ENCODE measurements at regions of chr1 and their contacts with region 1.

Region 1: GRCh38 chr1:171654942-171655745 is 2.7 kb upstream of the MYOC start:
- DNase-seq: peak; percentile 41 to 98
- H3K4me3 ChIP-seq: no peak overlapping the region; a peak in 2 of 8 replicates
- H3K27ac ChIP-seq: no peak overlapping the region
- H3K4me1 ChIP-seq: peaks cover 0 to 5% (median 0%) of the 10 kb centered on the region in 4 experiments; a peak in 1 of 7 replicates
- H3K27me3 ChIP-seq: no peaks in the 10 kb centered on the region
- CTCF ChIP-seq: peak; percentile 79 to 91 (median 85)
- EP300 ChIP-seq: no peak
- POLR2A ChIP-seq: no peak
- RAD21 ChIP-seq: peak; percentile 65 to 71

Region 2: GRCh38 chr1:171507435-171507834 is 147.7 kb before region 1 on chr1:
- CTCF ChIA-PET with region 1: no interaction called
- POLR2A ChIA-PET with region 1: no interaction called
- DNase-seq: no peak
- H3K4me3 ChIP-seq: no peak overlapping the region
- H3K27ac ChIP-seq: no peak overlapping the region
- H3K4me1 ChIP-seq: peaks cover 0 to 6% (median 3%) of the 10 kb centered on the region in 4 experiments; a peak in 2 of 7 replicates
- H3K27me3 ChIP-seq: no peaks in the 10 kb centered on the region
- CTCF ChIP-seq: no peak
- EP300 ChIP-seq: no peak
- POLR2A ChIP-seq: no peak
- RAD21 ChIP-seq: no peak

Region 3: DNA sequence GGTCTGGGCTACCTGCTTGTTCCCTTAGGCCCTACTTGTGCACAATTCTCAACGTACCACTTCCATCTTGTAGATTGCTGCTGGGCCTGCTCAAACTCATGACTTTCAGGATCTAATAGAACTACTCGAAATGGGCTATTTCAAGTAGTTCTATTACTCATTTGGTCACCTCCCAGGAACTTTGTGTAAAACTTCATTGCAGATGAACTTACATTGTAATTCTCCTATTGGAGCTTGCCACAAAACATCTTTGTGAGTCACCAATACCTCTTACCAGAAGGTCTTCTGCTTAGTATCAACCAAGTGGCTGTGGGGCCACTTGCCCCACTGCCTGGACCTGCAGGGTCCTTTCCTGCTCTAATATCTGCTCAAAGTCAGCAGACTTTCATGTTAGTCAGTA is 43.8 kb before region 1 on chr1:
- CTCF ChIA-PET with region 1: no interaction called
- POLR2A ChIA-PET with region 1: no interaction called
- DNase-seq: no peak
- H3K4me3 ChIP-seq: no peak overlapping the region
- H3K27ac ChIP-seq: no peak overlapping the region
- H3K4me1 ChIP-seq: no peaks in the 10 kb centered on the region
- H3K27me3 ChIP-seq: no peaks in the 10 kb centered on the region
- CTCF ChIP-seq: no peak
- EP300 ChIP-seq: no peak
- POLR2A ChIP-seq: no peak
- RAD21 ChIP-seq: no peak

Region 4: DNA sequence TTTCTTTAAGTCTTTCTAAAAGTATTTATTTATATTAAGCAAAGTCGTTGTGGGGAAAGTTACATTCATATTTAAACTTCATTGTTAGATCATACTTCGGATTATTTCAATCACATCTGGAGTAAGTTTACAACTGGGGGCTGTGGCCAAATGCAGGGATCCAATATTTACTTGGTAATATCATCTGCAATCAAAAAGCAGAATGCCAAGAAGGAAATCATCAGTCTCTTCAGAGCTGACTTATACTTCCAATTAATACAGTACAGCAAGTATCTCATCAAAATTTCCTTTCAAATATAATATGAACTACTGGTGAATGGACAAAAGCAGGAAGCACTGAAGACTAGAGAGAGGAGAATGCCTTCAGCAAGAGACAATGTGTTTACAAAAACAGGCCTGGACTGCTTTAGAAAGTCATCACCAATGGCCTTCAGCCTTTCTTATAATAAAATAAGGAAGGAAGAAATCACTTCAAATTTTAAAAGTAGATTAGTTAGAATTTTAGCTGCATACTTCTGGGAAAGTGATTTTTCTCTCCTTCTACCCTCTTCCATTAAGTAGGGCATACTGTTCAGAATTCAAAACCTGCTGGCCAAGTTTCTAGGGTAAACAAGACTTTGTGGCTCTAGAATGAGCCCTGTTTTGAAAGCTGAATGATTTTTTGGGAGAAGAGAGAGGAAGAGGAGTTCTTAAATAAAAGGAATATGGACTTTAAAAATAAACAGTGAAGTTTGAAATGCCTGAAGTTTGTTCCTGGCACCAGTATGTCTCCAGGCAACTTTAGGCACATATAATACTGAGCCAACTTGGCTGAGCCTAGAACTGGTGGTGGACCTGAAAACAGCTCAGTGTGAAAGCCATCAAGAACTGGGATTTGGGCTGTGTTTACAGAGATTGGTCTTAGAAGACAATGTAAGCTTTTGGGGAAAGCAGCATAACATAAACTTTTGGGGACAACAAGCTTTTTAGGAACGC is 19.6 kb after region 1 on chr1:
- CTCF ChIA-PET with region 1: interaction called, 61 read pairs
- POLR2A ChIA-PET with region 1: no interaction called
- DNase-seq: no peak
- H3K4me3 ChIP-seq: no peak overlapping the region
- H3K27ac ChIP-seq: no peak overlapping the region
- H3K4me1 ChIP-seq: no peaks in the 10 kb centered on the region
- H3K27me3 ChIP-seq: no peaks in the 10 kb centered on the region
- CTCF ChIP-seq: no peak
- EP300 ChIP-seq: no peak
- POLR2A ChIP-seq: no peak
- RAD21 ChIP-seq: no peak

Region 5: DNA sequence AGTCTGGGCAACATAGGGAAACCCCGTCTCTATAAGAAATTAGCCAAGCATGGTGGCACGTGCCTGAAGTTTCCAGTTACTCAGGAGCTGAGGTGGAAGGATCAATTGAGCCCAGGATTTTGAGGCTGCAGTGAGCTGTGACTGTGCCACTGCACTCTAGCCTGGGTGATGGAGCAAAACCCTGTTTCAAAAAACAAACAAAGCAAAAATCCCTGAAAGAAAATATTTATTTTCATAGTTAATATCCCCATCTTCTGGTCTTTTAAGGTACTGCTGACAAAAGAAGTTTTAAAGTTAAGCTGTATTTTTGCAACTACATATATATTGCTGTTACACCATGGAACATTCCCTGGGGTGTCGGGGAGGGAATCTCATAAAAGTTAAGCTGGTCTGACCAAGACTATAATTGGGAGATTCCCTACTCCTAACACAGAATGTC is 60.7 kb after region 1 on chr1:
- CTCF ChIA-PET with region 1: interaction called, 38 read pairs
- POLR2A ChIA-PET with region 1: interaction called, 3 read pairs
- DNase-seq: no peak
- H3K4me3 ChIP-seq: no peak overlapping the region
- H3K27ac ChIP-seq: no peak overlapping the region
- H3K4me1 ChIP-seq: no peaks in the 10 kb centered on the region
- H3K27me3 ChIP-seq: no peaks in the 10 kb centered on the region
- CTCF ChIP-seq: peak in 2 of 3 experiments; percentile 13 to 29; a peak in 2 of 4 replicates
- EP300 ChIP-seq: no peak
- POLR2A ChIP-seq: no peak
- RAD21 ChIP-seq: peak; percentile 34 to 35; a peak in 3 of 4 replicates

Region 6: DNA sequence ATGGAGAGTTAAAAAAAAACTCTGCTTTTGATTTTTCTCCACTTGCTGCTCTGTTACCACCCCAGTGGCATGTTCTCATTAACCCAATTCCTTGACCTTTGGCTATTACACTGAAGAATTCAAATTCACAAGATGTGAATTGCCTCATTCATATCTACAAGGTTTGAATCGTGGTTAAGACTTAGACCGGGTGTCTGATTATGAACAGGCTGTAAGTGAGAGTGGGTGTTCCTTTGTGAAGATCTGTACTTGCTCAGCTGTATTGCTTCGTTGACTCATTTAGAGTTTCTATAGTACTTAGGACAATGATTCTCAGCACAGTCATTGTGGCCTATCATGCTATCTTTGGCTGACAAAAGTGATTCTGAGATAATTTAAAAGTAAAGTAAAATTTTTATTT is 222.6 kb after region 1 on chr1:
- CTCF ChIA-PET with region 1: no interaction called
- POLR2A ChIA-PET with region 1: no interaction called
- DNase-seq: no peak
- H3K4me3 ChIP-seq: no peak overlapping the region
- H3K27ac ChIP-seq: no peak overlapping the region
- H3K4me1 ChIP-seq: peaks cover 0 to 3% (median 0%) of the 10 kb centered on the region in 4 experiments; a peak in 2 of 7 replicates
- H3K27me3 ChIP-seq: no peaks in the 10 kb centered on the region
- CTCF ChIP-seq: no peak
- EP300 ChIP-seq: no peak
- POLR2A ChIP-seq: no peak
- RAD21 ChIP-seq: no peak

Measured in H1 (cell line).